ENCODE measurements at regions of chr7 and their contacts with region 1.

Region 1: DNA sequence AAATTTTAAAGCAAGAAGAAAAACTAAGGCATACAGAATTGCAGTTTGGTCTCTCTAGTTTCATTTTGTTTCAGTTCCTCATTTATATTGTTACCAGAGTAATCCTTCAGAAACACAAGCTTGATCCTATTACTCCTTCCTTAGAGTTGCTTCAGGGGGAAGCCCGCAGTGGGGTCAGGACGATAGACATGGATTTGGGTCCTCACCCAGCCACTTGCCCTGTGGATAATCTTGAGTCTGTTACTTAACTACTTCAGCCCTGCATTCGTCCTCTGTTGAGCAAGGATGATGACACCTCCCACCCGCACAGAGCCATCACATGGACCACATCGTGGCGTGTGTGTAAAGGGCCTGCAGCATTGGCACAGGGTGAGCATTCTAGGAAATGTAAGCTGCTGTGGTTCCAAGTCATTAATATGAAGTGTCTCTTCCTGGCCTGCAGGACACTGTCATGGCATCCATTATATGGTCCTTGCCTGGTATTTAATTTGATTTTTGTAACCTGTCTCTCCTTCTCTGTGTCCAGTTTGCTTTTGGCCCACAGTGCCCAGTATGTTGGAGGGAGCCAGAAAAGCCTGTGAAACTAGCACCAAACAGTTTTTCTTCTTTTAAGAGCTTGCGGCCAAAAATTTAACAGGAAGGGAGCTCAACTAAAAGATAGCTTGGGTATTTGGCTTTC is 111.2 kb downstream of the EEPD1 start:
- DNase-seq: no peak
- ATAC-seq: peak in 3 of 4 donors; percentile 49 to 55 (median 50)
- H3K4me3 ChIP-seq: no peak overlapping the region
- H3K27ac ChIP-seq: peak overlapping the region in 6 of 12 donors; percentile 1 to 87 (median 18)
- H3K4me1 ChIP-seq: peaks cover 0 to 57% (median 32%) of the 10 kb centered on the region in 12 donors
- H3K27me3 ChIP-seq: no peaks in the 10 kb centered on the region
- CTCF ChIP-seq: no peak
- POLR2A ChIP-seq: no peak

Region 2: DNA sequence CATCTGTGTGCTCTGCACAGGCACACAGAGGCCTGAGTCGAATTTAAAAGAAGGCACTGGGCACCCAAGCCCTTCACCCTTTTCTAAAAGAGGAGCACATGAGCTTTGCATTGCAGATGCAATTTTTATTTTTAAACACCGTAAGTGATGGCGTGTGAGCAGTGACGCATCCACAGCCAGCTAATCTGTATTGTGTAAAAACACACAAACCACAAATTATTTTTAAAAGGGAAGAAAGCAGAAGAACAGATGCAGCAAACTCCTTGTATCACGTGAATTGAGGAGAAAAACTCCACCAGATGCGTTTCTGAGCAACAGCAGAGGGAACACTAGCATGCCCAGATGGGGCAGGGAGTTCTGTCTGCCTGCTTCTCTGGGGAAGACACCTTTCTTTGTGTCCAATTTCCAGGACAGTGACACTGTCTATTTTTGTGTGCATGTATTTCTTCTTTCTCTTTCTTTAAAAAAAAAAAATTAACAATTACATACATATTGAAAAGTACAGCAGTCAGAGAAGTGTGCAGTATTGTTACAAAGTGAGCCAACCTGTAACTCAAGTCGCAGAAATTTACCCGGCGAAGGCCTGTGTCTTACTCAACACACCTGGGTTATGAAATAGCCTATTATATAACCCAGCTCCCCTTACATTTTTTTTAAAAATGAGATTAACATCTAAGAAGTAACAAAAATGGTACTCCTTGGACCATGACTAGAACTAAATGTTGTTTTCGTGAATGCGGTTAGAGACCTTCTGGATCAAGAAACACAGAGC is 72.0 kb before region 1 on chr7:
- intact Hi-C with region 1: no loop called
- DNase-seq: peak in 2 of 5 donors; percentile 31 to 42
- ATAC-seq: peak; percentile 14 to 63 (median 36)
- H3K4me3 ChIP-seq: no peak overlapping the region
- H3K27ac ChIP-seq: peak overlapping the region in 2 of 12 donors; percentile 63 to 69
- H3K4me1 ChIP-seq: peaks cover 3 to 47% (median 26%) of the 10 kb centered on the region in 12 donors
- H3K27me3 ChIP-seq: no peaks in the 10 kb centered on the region
- CTCF ChIP-seq: no peak
- POLR2A ChIP-seq: no peak

Region 3: DNA sequence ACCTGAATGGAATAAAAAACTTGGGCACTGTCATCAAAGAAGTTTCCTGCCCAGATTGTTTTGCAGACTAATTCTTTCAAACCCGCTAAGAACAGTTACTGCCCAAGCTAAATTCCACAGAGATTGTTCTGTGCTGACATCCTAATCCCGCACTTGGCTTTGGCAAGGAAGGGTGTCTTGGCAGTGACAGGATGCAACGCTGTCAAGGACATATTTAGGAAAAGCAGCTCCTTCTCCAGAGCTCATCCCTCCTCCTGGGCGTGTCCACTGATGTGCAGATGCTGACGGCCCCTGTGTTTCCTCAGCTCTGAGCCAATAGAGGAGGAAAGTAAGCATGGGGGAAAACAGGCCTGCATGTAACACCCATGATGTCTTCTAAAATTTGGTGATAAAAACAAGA is 37.0 kb before region 1 on chr7:
- intact Hi-C with region 1: loop called in 1 of 10 experiments (anchors 5 kb)
- DNase-seq: peak in 3 of 5 donors; percentile 31 to 54 (median 39)
- ATAC-seq: peak in 3 of 4 donors; percentile 67 to 77 (median 70)
- H3K4me3 ChIP-seq: no peak overlapping the region
- H3K27ac ChIP-seq: peak overlapping the region in 2 of 12 donors; percentile 8 to 23
- H3K4me1 ChIP-seq: peaks cover 0 to 44% (median 12%) of the 10 kb centered on the region in 12 donors
- H3K27me3 ChIP-seq: no peaks in the 10 kb centered on the region
- CTCF ChIP-seq: no peak
- POLR2A ChIP-seq: no peak

Region 4: GRCh38 chr7:36415144-36415543 is 150.9 kb after region 1 on chr7:
- intact Hi-C with region 1: no loop called
- DNase-seq: no peak
- ATAC-seq: no peak
- H3K4me3 ChIP-seq: no peak overlapping the region
- H3K27ac ChIP-seq: no peak overlapping the region
- H3K4me1 ChIP-seq: no peaks in the 10 kb centered on the region
- H3K27me3 ChIP-seq: no peaks in the 10 kb centered on the region
- CTCF ChIP-seq: no peak
- POLR2A ChIP-seq: no peak